ENCODE measurements at regions of chr9 and their contacts with region 1.

Region 1: DNA sequence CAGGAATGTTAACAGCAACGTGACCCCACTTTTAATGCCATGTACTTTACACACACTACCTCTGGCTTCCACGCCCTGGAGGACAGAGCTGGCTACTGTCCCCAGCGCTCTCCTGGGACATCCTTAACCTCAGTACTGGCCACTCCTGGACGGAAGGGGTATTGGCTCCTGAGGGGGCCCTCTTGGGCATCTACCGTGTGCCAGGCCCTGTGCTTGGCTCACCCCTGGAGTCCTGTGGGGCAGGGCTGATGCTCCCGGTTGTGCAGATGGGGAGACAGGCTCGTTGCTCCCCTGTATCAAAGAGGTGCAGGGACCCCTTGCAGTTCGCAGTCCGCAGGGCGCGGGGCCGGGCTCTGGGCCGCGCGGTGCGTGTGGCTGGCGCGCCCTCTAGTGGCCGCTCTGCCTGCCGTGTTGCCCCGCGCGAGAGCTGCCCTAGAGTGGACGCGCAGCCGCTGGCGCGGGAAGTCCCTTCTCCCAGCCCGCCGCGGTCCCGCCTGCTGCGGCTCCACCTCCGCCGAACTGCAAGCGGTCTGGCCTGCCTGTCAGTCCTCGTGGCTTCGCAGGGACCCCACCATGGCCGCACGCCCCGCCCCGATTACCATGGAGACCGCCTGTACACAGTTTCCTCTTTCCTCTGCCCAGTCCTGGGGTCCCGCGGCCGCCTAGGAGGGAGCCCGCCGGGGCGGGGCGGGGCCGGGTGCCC is at the start of gene WDR38:
- DNase-seq: peak; percentile 84

Region 2: DNA sequence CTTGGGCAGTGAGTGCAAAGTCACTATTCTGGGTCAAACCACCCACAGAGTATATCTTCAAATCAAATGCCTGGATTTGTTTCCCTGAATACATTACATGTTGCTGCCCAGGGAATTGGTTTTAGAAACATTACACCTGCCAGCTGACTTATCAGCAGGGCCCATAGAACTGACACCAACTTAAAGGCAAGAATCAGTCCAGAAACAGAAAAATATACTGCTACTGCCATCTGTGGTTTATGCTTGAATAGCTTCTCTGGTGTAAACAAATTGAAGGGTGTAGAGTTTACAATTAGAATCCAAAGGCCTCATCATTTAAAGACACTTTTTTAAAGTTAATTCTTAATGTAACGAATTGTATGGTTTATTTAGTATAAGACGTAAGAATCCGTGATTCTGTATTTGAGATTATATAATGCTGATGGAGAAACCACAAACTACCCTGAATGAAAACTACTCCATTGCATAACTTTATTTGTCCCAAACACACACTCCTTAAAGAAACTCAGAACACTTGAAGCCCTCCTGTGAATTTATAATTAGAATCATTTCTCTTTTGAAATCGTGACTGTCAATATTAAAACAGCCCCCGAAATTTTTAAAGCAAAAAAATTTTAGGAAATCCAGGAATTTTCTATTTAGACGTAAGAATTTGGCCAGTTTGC is 88.1 kb before region 1 on chr9:
- CTCF ChIA-PET with region 1: interaction called, 244 read pairs
- POLR2A ChIA-PET with region 1: interaction called, 24 read pairs
- DNase-seq: no peak

Region 3: DNA sequence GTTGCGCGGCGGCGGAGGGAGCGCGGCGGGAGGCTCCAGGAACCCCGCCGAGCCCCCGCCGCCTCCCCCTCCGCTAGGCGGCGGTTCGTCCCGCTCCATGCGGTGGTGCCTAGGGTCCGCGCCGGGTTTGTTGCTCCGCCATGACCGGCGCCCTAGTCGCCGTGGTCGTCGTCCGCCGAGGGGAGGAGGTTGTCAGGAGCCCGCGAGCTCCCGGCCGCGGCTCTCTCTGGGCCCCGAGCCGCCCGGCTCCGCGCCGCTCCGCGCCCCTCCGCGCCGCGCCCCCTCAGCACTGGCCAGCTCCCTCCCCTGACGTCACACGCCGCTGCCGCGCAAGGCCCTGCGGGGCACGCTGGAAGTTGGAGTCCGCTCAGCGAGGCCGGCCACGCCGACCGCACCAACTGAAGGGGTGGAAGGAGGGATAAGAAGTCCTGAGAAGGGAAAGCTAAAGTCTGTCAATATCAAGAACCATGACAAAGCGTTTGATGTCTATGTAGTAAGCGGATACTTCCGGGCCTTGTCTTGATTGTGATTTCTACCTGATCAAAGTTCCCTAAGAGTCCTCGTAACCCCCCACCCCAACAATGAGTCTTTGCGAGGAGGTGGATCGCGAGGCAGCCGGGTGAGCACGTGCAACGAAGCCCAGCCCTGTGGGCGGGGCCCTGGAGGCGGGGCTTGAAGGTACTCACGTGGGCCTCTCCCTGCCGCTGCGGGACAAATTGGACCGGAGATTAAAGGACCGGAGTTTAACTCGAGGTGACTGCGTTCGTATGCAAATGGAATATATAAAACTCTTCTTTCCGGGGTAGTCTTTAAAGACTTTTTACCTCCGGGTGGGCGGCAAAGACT is 81.7 kb before region 1 on chr9 and contains the start of gene NR6A1:
- CTCF ChIA-PET with region 1: interaction called, 244 read pairs
- POLR2A ChIA-PET with region 1: interaction called, 24 read pairs
- DNase-seq: peak; percentile 93

Region 4: GRCh38 chr9:124776954-124777665 is 75.9 kb before region 1 on chr9 and contains the start of gene OLFML2A:
- CTCF ChIA-PET with region 1: interaction called, 244 read pairs
- POLR2A ChIA-PET with region 1: interaction called, 24 read pairs
- DNase-seq: peak; percentile 44

Region 5: GRCh38 chr9:124788542-124789217 is 64.3 kb before region 1 on chr9:
- CTCF ChIA-PET with region 1: interaction called, 11 read pairs
- POLR2A ChIA-PET with region 1: no interaction called
- DNase-seq: no peak

Region 6: DNA sequence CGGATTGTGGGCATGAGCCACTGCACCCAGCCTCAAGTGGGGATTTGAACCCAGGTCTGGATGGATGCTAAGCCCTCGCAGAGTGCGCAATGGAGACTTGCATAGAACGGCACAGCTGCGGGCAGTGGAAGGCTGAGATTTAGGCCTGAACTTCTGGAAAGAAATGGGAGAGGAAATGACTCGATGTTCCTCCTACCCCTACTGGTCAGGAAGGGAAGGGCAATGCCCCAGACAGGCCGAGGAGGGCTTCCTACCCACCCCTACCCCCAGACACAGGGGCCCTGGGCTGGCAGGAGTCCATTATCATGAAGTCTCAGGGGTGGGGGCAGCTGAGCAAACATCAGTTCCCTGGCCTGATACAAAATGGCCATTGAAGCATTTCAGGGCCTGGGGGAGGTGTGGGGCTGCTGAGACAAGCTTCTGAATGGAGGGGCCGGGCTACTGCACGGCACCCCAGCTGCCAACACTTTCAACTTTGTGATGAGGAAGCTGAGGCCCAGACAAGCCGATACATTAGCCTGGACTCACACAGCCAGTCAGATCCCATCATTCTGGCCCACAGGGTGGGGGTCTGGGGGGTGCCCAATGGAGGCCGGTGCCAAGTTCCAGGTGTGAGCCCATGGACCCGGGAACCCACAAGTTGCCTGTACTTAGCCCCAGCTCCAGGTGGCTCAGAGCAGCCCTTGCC is 13.2 kb before region 1 on chr9:
- CTCF ChIA-PET with region 1: interaction called, 30 read pairs
- POLR2A ChIA-PET with region 1: interaction called, 3 read pairs
- DNase-seq: peak; percentile 59